ENCODE measurements at regions of chr2 and their contacts with region 1.

Region 1: DNA sequence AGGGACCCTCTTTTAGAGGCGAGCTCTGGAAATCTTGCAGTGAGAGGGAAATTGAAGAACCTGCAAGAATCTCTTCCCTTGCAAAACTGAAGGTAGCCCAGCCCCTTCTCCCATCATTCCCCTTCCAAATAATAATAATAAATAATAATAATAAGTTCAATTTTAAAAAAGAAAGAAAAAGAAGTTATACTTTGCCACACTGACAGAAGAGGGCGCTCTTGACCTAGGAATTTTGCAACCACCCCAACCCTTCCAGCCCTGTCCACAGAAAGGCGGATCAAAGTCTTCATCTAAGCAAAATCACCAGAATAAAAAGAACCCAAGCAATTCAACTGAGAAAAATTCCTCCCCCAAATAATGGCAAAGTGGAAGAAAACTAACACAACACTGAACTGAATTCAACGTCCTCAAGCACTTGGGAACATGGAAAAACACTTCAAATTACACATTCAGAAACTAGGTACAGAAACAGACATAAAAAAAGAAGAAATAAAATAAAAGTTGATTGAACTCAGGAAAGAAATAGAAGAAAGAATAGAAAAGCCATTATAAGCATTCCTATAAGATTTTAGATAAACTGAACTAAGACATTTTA is 98.9 kb upstream of the GLS start:
- DNase-seq: peak; percentile 74 to 88 (median 79)
- H3K4me3 ChIP-seq: no peak overlapping the region
- H3K27ac ChIP-seq: no peak overlapping the region
- H3K4me1 ChIP-seq: peaks cover 0 to 2% (median 0%) of the 10 kb centered on the region in 4 experiments
- H3K27me3 ChIP-seq: no peaks in the 10 kb centered on the region

Region 2: DNA sequence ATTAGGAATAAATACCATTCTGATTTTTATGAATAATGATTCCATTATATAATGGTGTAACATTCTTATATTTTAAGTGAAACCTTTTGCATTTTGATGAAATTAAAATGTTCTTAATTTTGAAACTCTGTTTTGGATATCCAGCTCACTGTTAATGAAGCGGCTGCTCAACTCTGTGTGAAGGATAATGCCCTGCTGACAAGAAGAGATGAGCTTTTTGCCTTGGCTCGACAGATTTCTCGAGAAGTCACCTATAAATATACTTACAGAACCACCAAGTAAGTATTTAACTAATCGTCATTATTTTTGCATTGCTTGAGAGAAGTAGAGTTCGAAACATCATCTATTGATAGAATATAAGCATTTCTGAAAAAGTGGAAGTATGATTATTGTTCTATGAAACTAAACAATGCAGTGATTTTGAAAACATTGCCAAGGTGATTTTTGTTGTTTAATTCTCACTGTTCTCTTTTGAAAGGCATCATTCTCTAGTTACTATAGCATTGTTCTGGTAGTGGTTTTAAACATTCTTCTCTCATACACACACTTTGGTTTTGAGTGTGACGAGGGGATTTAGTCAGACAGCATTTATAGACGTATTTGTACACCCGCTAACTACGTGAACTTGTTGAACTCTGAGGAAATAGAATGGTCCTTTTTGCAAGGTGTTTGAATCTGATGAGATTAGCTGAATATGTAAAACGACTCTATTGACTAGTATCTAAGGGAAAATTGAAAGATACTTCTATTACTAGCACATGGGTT is 111.3 kb before region 1 on chr2:
- CTCF ChIA-PET with region 1: no interaction called
- POLR2A ChIA-PET with region 1: no interaction called
- DNase-seq: no peak
- H3K4me3 ChIP-seq: no peak overlapping the region
- H3K27ac ChIP-seq: no peak overlapping the region
- H3K4me1 ChIP-seq: peaks cover 0 to 7% (median 2%) of the 10 kb centered on the region in 4 experiments
- H3K27me3 ChIP-seq: no peaks in the 10 kb centered on the region

Region 3: DNA sequence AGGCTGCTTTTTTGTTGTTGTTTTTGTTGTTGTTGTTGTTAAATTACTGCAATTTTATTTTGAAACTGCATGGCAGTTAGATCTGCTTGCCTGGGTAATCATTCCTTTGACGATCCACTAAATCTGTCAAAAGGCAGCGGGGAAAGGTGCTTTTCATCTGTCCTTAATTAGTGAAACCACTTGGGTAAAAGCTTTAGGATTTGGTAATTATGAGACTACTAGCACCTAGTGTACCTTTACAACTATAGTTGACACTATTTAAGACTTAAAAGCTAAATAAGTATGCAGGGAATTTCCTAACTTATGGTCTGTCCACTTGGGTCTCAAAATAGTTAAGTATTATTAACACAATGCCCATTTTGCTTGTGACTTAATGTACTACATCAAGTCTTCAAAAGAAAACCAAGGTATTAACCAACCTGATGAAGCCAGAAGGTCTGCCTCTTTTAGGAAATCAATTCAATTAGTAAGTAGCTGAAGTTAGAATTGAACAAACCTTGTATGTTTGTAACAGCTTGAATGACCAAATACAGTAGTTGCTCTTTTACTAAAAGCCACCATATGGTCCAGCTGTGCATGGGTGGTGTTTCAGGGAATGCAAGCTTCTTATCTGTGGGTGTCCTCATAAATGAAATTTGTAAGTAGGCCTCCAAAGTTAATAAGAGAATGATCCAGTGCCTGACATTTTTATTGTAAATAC is 88.0 kb before region 1 on chr2:
- CTCF ChIA-PET with region 1: no interaction called
- POLR2A ChIA-PET with region 1: no interaction called
- DNase-seq: no peak
- H3K4me3 ChIP-seq: no peak overlapping the region
- H3K27ac ChIP-seq: no peak overlapping the region
- H3K4me1 ChIP-seq: no peaks in the 10 kb centered on the region
- H3K27me3 ChIP-seq: no peaks in the 10 kb centered on the region

Region 4: GRCh38 chr2:190804182-190804795 is 22.6 kb after region 1 on chr2:
- CTCF ChIA-PET with region 1: interaction called, 23 read pairs
- POLR2A ChIA-PET with region 1: no interaction called
- DNase-seq: peak; percentile 22 to 66 (median 58)
- H3K4me3 ChIP-seq: no peak overlapping the region
- H3K27ac ChIP-seq: no peak overlapping the region
- H3K4me1 ChIP-seq: no peaks in the 10 kb centered on the region
- H3K27me3 ChIP-seq: no peaks in the 10 kb centered on the region

Region 5: DNA sequence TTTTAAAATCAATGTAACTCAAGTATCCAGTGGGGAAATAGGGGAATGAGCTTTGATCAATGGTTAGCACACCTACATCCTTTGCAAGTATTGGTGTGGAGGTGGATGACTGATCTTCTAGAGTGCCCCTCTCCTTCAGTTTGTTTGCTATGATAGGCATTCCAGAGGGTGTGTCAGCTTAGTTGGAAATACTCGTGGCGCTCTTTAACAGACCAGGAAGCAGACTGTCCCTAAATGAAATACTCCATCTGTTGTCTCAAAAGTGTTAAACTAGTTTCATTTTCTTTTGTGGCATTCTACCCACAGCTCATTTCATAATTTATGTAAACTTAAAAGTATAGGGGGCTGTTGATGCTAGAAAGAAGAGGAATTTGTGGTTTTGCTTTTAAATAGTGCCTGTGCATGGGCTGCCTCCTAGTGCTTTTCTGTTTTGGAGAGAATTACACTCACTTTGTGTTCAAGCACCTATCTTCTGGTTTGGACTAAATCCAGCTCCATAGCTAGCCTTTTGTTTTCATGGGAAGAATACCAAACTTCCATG is 166.1 kb after region 1 on chr2:
- CTCF ChIA-PET with region 1: interaction called, 11 read pairs
- POLR2A ChIA-PET with region 1: no interaction called
- DNase-seq: peak; percentile 83 to 95 (median 92)
- H3K4me3 ChIP-seq: peak overlapping the region in 6 of 7 experiments; percentile 44 to 78 (median 58)
- H3K27ac ChIP-seq: peak overlapping the region; percentile 77 to 85
- H3K4me1 ChIP-seq: peaks cover 19 to 33% (median 22%) of the 10 kb centered on the region in 4 experiments
- H3K27me3 ChIP-seq: no peaks in the 10 kb centered on the region

Measured in common myeloid progenitor, CD34-positive (primary cell).